ENCODE measurements at regions of chr9 and their contacts with region 1.

Region 1: GRCh38 chr9:133545494-133546286 is 11.2 kb downstream of the ADAMTSL2 start:
- DNase-seq: no peak
- H3K4me3 ChIP-seq: no peak overlapping the region
- H3K27ac ChIP-seq: no peak overlapping the region
- H3K4me1 ChIP-seq: no peaks in the 10 kb centered on the region
- H3K27me3 ChIP-seq: peaks cover 88% of the 10 kb centered on the region
- CTCF ChIP-seq: no peak

Region 2: DNA sequence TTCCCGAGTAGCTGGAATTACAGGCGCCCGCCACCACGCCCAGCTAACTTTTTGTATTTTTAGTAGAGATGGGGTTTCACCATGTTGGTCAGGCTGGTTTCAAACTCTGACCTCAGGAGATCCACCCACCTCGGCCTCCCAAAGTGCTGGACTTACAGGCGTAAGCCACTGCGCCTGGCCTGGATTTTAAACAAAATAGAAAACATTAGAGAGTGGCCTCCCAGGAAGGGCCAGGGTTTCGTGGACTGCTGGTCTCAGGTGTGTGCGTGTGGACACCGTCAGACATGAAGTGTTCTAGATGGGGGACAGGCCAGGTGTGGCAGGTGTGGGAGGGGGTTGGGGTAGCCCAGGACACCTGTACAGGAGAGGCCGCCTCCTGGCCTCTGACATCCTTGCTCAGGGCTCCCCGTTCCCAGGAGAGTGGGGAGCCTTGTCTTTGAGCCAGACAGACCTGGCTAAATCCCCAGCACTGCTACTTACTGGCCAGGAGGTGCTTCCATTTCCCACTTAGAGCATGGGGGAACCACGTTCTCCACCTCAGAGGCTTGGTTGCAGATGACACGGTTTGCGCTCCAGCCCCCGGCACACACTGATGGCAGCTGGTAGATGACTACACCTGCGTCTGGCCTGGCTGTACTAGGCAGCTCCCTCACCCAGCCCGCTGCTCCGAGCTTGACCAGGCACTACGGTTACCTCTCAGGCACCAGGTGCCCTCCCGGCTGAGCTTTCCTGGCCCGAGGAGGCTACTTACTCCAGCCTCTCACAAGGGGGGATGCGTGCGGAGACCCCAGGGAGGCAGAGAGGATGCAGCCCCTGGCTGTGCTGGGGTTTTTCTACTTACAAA is 374.8 kb before region 1 on chr9:
- CTCF ChIA-PET with region 1: no interaction called
- POLR2A ChIA-PET with region 1: interaction called, 10 read pairs
- intact Hi-C with region 1: no loop called
- DNase-seq: no peak
- H3K4me3 ChIP-seq: no peak overlapping the region
- H3K27ac ChIP-seq: no peak overlapping the region
- H3K4me1 ChIP-seq: no peaks in the 10 kb centered on the region
- H3K27me3 ChIP-seq: peaks cover 41% of the 10 kb centered on the region
- CTCF ChIP-seq: no peak

Region 3: DNA sequence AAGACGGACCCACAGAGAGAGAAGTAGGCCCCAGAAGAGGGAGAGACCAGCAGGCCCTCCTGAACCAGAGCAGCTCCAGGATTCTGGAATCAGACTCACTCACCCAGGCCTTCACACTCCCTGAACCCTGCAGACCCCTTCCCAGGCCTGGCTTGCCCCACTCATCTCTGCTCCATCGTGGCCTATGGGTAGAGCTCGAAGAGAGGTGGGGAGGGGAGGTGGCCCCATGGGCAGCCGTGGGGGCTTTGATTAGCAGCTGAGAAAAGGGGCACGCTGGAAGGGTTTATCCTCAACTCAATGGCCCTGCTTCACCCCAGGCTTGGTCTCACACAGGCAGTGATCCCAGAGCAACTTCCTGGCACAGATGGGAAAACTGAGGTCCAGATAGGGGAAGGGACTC is 21.5 kb before region 1 on chr9:
- CTCF ChIA-PET with region 1: interaction called, 13 read pairs
- POLR2A ChIA-PET with region 1: no interaction called
- intact Hi-C with region 1: no loop called
- DNase-seq: no peak
- H3K4me3 ChIP-seq: no peak overlapping the region
- H3K27ac ChIP-seq: no peak overlapping the region
- H3K4me1 ChIP-seq: no peaks in the 10 kb centered on the region
- H3K27me3 ChIP-seq: peaks cover 97% of the 10 kb centered on the region
- CTCF ChIP-seq: no peak